Activated CD8-positive, alpha-beta T cell treated with anti-CD3 and anti-CD28 coated beads, Interleukin-2, amount 10 ng/mL, durations not matched to agents 7 days and 5 days (primary cell): ENCODE measurements at regions of chr5 and their contacts with region 1.

Region 1: GRCh38 chr5:100903039-100903887 is at the start of gene ST8SIA4:
- DNase-seq: peak; percentile 97
- ATAC-seq: peak; percentile 79
- H3K4me3 Mint-ChIP-seq: peak within 1 kb of the TSS; percentile 99
- H3K27ac Mint-ChIP-seq: peak within 1 kb of the TSS; percentile 97
- H3K4me1 Mint-ChIP-seq: peaks cover 40% of the 10 kb centered on the region
- H3K27me3 Mint-ChIP-seq: no peaks in the 10 kb centered on the region
- total RNA-seq, gene ST8SIA4: 35.8 to 37.5 TPM

Region 2: DNA sequence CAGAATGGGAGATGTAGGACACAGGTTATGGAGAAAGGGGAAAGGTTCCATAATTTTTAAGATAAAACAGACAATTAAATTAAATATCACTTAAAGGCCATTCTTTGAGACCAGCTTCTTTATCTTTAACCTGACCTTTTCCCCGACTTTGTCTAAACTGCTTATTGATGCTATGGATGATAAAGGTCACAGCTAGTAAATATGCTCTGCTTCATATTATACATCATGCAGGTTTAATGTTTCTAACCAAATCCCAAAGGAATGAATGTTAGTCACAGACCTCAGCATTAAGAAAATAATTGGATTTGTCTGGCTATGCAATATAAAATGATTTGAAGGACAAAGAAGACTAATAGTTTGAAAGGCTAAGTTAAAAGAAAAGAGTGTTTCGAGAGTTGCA is 147.8 kb before region 1 on chr5:
- CTCF ChIA-PET with region 1: no interaction called
- POLR2A ChIA-PET with region 1: no interaction called
- DNase-seq: no peak
- ATAC-seq: no peak
- H3K4me3 Mint-ChIP-seq: no peak overlapping the region
- H3K27ac Mint-ChIP-seq: no peak overlapping the region
- H3K4me1 Mint-ChIP-seq: no peaks in the 10 kb centered on the region
- H3K27me3 Mint-ChIP-seq: peaks cover 12% of the 10 kb centered on the region

Region 3: GRCh38 chr5:100772548-100772947 is 130.7 kb before region 1 on chr5:
- CTCF ChIA-PET with region 1: interaction called, 57 read pairs
- POLR2A ChIA-PET with region 1: interaction called, 65 read pairs
- DNase-seq: no peak
- ATAC-seq: no peak
- H3K4me3 Mint-ChIP-seq: no peak overlapping the region
- H3K27ac Mint-ChIP-seq: no peak overlapping the region
- H3K4me1 Mint-ChIP-seq: peaks cover 2% of the 10 kb centered on the region
- H3K27me3 Mint-ChIP-seq: peaks cover 4% of the 10 kb centered on the region

Region 4: GRCh38 chr5:100840384-100840783 is 62.9 kb before region 1 on chr5:
- CTCF ChIA-PET with region 1: interaction called, 48 read pairs
- POLR2A ChIA-PET with region 1: interaction called, 65 read pairs
- DNase-seq: peak; percentile 25
- ATAC-seq: peak; percentile 46
- H3K4me3 Mint-ChIP-seq: no peak overlapping the region
- H3K27ac Mint-ChIP-seq: peak overlapping the region; percentile 26
- H3K4me1 Mint-ChIP-seq: peaks cover 53% of the 10 kb centered on the region
- H3K27me3 Mint-ChIP-seq: no peaks in the 10 kb centered on the region

Region 5: GRCh38 chr5:100872408-100873190 is 30.7 kb before region 1 on chr5:
- CTCF ChIA-PET with region 1: interaction called, 10 read pairs
- POLR2A ChIA-PET with region 1: interaction called, 6 read pairs
- DNase-seq: no peak
- ATAC-seq: no peak
- H3K4me3 Mint-ChIP-seq: no peak overlapping the region
- H3K27ac Mint-ChIP-seq: no peak overlapping the region
- H3K4me1 Mint-ChIP-seq: peaks cover 22% of the 10 kb centered on the region
- H3K27me3 Mint-ChIP-seq: no peaks in the 10 kb centered on the region